ENCODE measurements at regions of chr10 and their contacts with region 1.

Region 1: DNA sequence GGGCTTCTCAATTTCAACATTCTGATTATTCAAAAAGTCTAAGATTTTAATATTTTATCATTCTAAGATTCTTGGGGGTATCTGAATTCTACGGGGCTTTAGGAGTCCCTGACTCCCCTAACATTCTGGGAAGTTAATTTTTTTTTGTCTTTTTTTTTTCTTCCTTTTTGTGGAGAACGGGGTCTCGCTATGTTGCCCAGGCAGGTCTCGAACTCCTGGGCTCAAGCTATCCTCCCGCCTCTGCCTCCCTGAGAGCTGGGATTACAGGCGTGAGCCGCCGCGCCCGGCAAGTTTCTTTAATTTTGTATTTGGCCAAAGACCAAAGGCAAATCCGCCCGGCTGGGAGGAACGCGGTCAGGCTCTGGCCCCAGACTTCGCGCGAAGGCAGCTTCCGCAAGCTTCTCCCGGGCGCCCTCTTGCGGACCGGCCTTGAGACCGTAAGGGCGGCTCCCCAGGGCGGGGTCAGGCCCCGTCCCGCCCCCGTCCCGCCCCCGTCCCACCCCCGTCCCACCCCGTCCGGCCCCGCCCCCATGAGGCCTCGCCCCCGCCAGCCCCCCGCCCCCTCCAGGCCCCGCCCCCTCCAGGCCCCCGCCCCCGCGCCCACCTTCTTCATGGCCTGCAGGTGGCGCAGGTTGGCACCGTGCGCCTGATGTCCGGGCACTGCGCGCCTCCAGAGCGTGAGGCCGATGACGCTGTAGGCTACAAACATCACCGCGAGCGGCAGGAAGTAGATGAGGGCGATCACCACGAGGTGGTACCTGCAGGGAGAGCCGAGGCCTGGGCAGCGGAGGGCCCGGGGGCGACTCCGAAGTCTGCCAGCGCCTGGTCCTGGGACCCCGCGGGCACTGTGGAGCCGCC is 8.2 kb downstream of the TACR2 start:
- DNase-seq: peak; percentile 92
- H3K4me3 Mint-ChIP-seq: peak overlapping the region; percentile 50
- H3K27ac Mint-ChIP-seq: peak overlapping the region; percentile 91
- H3K4me1 Mint-ChIP-seq: peaks cover 34% of the 10 kb centered on the region
- H3K27me3 Mint-ChIP-seq: peaks cover 3% of the 10 kb centered on the region

Region 2: GRCh38 chr10:69237528-69238159 is 170.9 kb before region 1 on chr10:
- CTCF ChIA-PET with region 1: interaction called, 25 read pairs
- DNase-seq: peak; percentile 90
- H3K4me3 Mint-ChIP-seq: no peak overlapping the region
- H3K27ac Mint-ChIP-seq: no peak overlapping the region
- H3K4me1 Mint-ChIP-seq: peaks cover 53% of the 10 kb centered on the region
- H3K27me3 Mint-ChIP-seq: peaks cover 5% of the 10 kb centered on the region

Region 3: GRCh38 chr10:69392481-69393000 is 16.0 kb before region 1 on chr10:
- CTCF ChIA-PET with region 1: interaction called, 14 read pairs
- DNase-seq: peak; percentile 90
- H3K4me3 Mint-ChIP-seq: no peak overlapping the region
- H3K27ac Mint-ChIP-seq: peak overlapping the region; percentile 84
- H3K4me1 Mint-ChIP-seq: peaks cover 35% of the 10 kb centered on the region
- H3K27me3 Mint-ChIP-seq: no peaks in the 10 kb centered on the region